ENCODE measurements at regions of chr20 and their contacts with region 1.

Region 1: DNA sequence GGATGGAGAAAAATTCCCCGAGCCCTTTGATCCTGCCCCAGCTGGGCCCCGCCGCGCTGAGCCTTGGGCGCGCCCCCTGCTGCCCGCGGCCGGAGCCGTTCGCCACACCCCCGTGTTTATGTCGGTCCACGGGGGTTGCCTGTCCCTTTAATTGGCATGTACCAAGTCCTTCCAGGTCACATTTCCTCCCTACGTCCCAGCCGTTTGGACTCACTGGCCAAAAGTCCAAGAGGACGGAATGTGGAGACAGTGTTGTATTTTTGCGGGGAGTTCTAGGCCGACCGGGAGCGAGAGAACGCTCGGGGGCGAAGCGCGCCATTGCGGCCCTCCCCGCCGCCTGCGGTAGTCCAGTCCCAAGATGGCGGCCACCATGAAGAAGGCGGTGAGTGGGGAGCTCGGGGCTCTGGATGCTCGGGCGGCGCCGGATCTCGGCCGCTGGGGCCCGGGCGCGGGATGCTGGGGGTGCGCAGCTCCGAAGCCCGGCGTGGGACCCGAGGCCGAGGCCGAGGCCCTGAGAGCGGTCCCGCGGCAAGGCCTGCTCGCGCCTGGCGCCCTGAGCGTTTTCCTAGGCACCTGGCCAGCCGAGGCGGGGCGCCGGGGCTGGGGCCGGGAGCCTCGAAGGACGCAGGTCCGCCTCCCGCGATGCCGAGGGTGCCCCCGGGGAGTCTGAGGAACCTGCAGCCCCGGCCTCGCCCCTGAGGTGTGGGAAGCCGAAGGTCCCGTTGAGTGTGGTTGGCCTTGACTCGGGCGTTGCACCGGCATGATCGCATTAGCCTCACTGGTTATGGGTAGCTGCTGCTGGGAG is at the start of gene PFDN4:
- DNase-seq: peak; percentile 10
- H3K4me3 ChIP-seq: peak within 1 kb of the TSS; percentile 98
- CTCF ChIP-seq: peak; percentile 89

Region 2: DNA sequence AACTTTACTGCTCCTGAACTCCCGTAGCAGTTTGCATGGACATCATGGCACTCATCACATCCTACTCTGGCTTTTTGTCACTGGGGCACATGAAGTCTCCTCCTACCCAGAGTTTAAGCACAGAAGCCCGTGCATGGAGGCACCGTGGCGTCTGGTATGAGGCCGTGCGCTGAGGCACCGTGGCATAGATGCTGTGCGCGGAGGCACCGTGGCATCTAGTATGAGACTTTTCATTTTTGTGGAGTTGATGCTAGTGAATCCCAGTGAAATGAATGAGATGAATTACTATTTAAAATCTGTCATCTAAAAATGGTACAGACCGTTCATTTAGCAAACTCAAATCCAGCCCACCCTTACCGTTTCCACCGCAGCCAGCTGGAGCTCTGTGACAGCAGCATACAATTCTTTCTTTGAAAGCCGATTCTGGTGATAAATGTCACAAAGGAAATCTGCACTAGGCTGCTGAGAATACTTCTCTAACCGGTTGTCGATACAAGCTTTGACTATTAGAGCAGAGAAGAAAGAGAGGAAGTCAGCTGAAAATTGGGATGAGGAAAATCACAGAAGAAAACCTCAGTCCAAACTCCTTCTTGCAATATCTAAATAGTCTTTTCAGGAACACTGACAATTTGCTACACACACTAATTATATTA is 45.5 kb before region 1 on chr20:
- CTCF ChIA-PET with region 1: no interaction called
- POLR2A ChIA-PET with region 1: no interaction called
- DNase-seq: no peak
- H3K4me3 ChIP-seq: no peak overlapping the region
- CTCF ChIP-seq: no peak

Region 3: DNA sequence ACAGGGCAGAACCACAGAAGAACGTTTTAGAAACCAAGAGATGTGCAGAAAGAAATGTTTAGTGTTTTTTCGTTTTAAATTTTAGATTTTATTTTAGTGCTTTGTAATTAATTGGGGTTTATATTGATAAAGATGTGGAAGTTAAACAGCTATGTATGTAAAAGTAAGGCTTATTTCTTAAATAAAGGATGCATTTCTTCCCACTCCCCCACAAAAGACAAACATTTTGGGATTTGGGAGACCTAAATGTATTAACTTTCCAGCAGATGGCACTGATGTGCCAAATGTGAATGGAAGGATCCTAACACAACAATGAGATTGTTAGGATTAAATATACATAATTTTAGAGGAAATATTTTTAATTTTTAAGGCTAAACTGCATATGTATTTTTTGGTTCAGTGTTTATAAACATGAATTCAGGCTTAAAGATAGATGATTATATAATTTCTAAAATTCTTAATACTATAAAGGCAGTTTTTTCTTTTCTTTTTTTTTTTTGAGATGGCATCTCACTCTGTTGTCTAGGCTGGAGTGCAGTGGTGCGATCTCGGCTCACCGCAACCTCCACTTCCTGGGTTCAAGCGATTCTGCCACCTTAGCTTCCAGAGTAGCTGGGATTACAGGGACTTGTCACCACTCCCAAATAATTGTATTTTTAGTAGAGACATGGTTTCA is 11.9 kb after region 1 on chr20:
- CTCF ChIA-PET with region 1: interaction called, 106 read pairs
- POLR2A ChIA-PET with region 1: no interaction called
- DNase-seq: no peak
- H3K4me3 ChIP-seq: no peak overlapping the region
- CTCF ChIP-seq: peak; percentile 42

Region 4: GRCh38 chr20:54643791-54644190 is 435.8 kb after region 1 on chr20:
- CTCF ChIA-PET with region 1: interaction called, 52 read pairs
- POLR2A ChIA-PET with region 1: no interaction called
- DNase-seq: peak; percentile 62
- H3K4me3 ChIP-seq: no peak overlapping the region
- CTCF ChIP-seq: no peak

Region 5: DNA sequence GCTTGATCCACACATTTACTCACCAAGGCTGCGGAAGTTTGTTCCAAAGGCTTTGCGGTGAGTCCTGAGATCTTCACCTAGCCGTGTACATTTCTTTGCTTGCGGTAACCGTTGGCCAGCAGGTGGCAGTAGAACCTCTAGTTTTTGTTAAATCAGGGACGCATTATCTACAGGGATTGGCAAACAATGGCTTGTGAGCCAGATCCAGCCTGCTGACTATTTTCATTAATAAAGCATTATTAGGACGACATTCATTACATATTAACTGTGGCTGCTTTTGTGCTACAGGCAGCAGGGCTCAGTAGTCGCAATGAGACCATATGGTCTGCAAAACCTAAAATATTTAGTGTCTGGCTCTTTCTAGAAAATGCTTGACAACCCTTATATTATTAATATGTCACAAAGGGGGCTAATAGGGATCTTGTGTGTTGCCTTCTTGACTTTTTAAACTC is 441.6 kb after region 1 on chr20:
- CTCF ChIA-PET with region 1: interaction called, 52 read pairs
- POLR2A ChIA-PET with region 1: no interaction called
- DNase-seq: no peak
- H3K4me3 ChIP-seq: no peak overlapping the region
- CTCF ChIP-seq: peak; percentile 79

Measured in AG04449 (cell line).